Uterus (tissue), 4 donors: ENCODE measurements at regions of chr15 and their contacts with region 1.

Region 1: GRCh38 chr15:39580117-39580484 is 778 bp upstream of the THBS1 start:
- DNase-seq: peak; percentile 96 to 98
- H3K4me3 ChIP-seq: peak overlapping the region; percentile 90 to 91
- H3K27ac ChIP-seq: peak overlapping the region; percentile 98
- H3K4me1 ChIP-seq: peaks cover 6 to 11% of the 10 kb centered on the region in 2 donors
- H3K27me3 ChIP-seq: no peaks in the 10 kb centered on the region
- CTCF ChIP-seq: peak; percentile 89 to 99 (median 95)
- POLR2A ChIP-seq: no peak

Region 2: DNA sequence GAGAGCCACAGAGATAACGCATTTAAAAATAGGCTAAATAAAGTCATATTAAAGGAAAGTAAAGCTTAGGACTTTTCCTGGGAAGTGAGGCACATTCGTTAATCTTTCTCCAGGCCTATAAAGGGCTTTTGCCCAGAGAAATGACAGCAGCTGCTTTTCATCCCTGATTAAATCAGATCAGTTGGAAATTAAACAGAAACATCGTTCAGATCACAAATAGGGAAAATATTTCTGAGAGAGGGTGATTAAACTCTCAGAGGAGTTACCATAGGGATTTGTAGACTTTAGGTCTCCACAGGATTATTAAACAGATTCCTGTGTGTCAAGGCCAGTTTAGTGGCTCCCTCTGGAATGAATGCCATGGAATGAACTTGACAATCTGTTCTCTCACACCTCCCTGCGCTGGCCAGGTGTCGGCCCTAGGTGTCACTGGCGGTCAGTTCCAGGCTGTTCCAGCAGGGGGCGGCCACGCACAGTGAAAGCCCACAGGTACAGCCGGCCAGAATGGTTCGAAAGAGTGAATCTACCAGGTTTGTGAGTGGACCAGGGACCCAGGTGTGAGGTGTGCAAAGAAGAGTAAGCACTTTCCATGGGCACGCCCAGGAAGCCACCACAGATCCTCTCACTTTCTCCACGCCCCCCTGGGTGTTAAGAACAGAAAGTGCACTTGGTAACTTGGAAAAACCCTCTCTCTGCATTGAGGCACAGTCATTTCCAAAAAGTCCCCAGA is 762.5 kb before region 1 on chr15:
- intact Hi-C with region 1: loop called (anchors 5 kb)
- DNase-seq: peak; percentile 85 to 86
- H3K4me3 ChIP-seq: no peak overlapping the region
- H3K27ac ChIP-seq: peak overlapping the region in 1 of 2 donors; percentile 51
- H3K4me1 ChIP-seq: no peaks in the 10 kb centered on the region
- H3K27me3 ChIP-seq: no peaks in the 10 kb centered on the region
- CTCF ChIP-seq: peak; percentile 97 to 99 (median 98)
- POLR2A ChIP-seq: no peak

Region 3: DNA sequence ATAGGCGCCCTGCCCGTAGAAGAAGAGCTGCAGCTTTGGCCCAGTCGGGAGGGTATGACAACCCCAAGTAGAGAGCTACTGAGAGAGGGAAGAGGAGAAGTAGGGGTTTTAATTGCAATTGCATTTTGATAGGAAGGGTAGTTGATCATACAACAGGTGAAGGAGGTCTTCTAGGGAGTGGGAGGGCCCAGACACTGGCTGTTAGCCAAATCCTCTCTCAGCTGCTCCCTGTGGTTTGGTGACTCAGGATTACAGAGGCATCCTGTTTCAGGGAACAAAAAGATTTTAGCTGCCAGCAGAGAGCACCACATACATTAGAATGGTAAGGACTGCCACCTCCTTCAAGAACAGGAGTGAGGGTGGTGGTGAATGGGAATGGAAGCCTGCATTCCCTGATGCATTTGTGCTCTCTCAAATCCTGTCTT is 408.1 kb before region 1 on chr15:
- intact Hi-C with region 1: loop called (anchors 5 kb)
- DNase-seq: peak; percentile 59 to 74
- H3K4me3 ChIP-seq: no peak overlapping the region
- H3K27ac ChIP-seq: peak overlapping the region; percentile 58 to 71
- H3K4me1 ChIP-seq: peaks cover 14 to 20% of the 10 kb centered on the region in 2 donors
- H3K27me3 ChIP-seq: no peaks in the 10 kb centered on the region
- CTCF ChIP-seq: peak; percentile 37 to 68 (median 49)
- POLR2A ChIP-seq: no peak

Region 4: DNA sequence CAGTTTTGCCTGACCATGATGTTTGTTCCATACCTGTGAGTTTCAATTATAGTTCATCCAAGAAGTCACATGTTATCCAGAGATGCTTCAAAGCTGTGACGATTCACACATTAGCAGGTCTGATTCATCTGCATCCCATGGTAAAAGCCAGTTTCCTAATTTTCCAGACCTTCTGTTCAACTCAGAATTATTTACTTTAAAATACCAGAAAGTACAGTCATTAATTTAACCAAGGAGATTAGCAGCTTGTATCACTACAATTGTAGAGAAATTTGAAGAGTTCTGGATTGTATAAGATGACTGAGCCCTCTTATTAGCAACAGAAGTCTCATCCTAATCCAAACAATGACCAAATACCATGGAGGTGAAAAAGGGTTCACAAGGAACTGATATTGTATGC is 75.3 kb before region 1 on chr15:
- intact Hi-C with region 1: loop called (anchors 5 kb)
- DNase-seq: no peak
- H3K4me3 ChIP-seq: no peak overlapping the region
- H3K27ac ChIP-seq: peak overlapping the region; percentile 58 to 67
- H3K4me1 ChIP-seq: peaks cover 0 to 6% of the 10 kb centered on the region in 2 donors
- H3K27me3 ChIP-seq: no peaks in the 10 kb centered on the region
- CTCF ChIP-seq: no peak
- POLR2A ChIP-seq: no peak

Region 5: GRCh38 chr15:39819533-39819932 is 239.4 kb after region 1 on chr15:
- intact Hi-C with region 1: no loop called
- DNase-seq: no peak
- H3K4me3 ChIP-seq: no peak overlapping the region
- H3K27ac ChIP-seq: no peak overlapping the region
- H3K4me1 ChIP-seq: no peaks in the 10 kb centered on the region
- H3K27me3 ChIP-seq: no peaks in the 10 kb centered on the region
- CTCF ChIP-seq: no peak
- POLR2A ChIP-seq: no peak

Region 6: DNA sequence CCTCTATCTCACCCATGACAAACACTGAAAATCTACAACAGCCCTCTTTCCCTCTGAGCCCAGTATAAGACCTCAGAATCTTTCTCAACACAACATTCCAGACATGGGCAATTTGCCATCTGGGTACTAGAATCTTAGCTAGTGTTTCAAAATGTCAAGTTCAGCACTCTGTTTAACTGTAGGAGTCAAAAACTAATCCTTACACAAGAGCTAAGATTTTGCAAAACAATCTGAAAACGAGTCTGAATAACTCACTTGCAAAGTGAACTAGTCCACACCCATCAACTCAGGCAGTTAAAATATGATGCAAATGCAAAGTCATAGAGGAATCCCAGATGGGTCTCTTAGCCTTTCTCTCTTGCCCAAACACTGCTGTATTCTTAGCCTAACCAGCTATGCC is 272.1 kb after region 1 on chr15:
- intact Hi-C with region 1: no loop called
- DNase-seq: no peak
- H3K4me3 ChIP-seq: no peak overlapping the region
- H3K27ac ChIP-seq: no peak overlapping the region
- H3K4me1 ChIP-seq: no peaks in the 10 kb centered on the region
- H3K27me3 ChIP-seq: no peaks in the 10 kb centered on the region
- CTCF ChIP-seq: no peak
- POLR2A ChIP-seq: no peak